Mucosa of descending colon (tissue), 3 donors: ENCODE measurements at regions of chr6 and their contacts with region 1.

Region 1: GRCh38 chr6:149925974-149926777 is 3.3 kb upstream of the RAET1G start:
- DNase-seq: peak; percentile 86 to 98 (median 95)
- ATAC-seq: peak; percentile 93
- H3K4me3 ChIP-seq: no peak overlapping the region
- H3K4me1 ChIP-seq: peaks cover 8% of the 10 kb centered on the region
- CTCF ChIP-seq: peak; percentile 75

Region 2: GRCh38 chr6:149834513-149835481 is 91.4 kb before region 1 on chr6:
- intact Hi-C with region 1: loop called in 1 of 2 experiments (anchors 5 kb)
- DNase-seq: peak in 1 of 3 donors; percentile 89
- ATAC-seq: peak; percentile 75
- H3K4me3 ChIP-seq: no peak overlapping the region
- H3K4me1 ChIP-seq: no peaks in the 10 kb centered on the region
- CTCF ChIP-seq: peak; percentile 66

Region 3: GRCh38 chr6:149840345-149841075 is 85.7 kb before region 1 on chr6:
- intact Hi-C with region 1: loop called (anchors 5 kb)
- DNase-seq: peak; percentile 70 to 90 (median 78)
- ATAC-seq: peak; percentile 92
- H3K4me3 ChIP-seq: no peak overlapping the region
- H3K4me1 ChIP-seq: peaks cover 13% of the 10 kb centered on the region
- CTCF ChIP-seq: peak; percentile 34